ENCODE measurements at regions of chr3 and their contacts with region 1.

Region 1: GRCh38 chr3:101827211-101828174 is 21.8 kb upstream of the NFKBIZ start:
- DNase-seq: peak; percentile 68
- ATAC-seq: peak; percentile 86
- H3K4me3 Mint-ChIP-seq: peak overlapping the region; percentile 87
- H3K27ac Mint-ChIP-seq: peak overlapping the region; percentile 98
- H3K4me1 Mint-ChIP-seq: peaks cover 66% of the 10 kb centered on the region
- H3K27me3 Mint-ChIP-seq: no peaks in the 10 kb centered on the region
- CTCF ChIP-seq: no peak

Region 2: GRCh38 chr3:100603469-100603868 is 1224.0 kb before region 1 on chr3:
- CTCF ChIA-PET with region 1: no interaction called
- POLR2A ChIA-PET with region 1: no interaction called
- intact Hi-C with region 1: no loop called
- DNase-seq: no peak
- ATAC-seq: peak; percentile 45
- H3K4me3 Mint-ChIP-seq: peak overlapping the region; percentile 83
- H3K27ac Mint-ChIP-seq: peak overlapping the region; percentile 97
- H3K4me1 Mint-ChIP-seq: peaks cover 27% of the 10 kb centered on the region
- H3K27me3 Mint-ChIP-seq: peaks cover 3% of the 10 kb centered on the region
- CTCF ChIP-seq: no peak

Region 3: GRCh38 chr3:101809178-101810021 is 18.1 kb before region 1 on chr3:
- CTCF ChIA-PET with region 1: interaction called, 11 read pairs
- POLR2A ChIA-PET with region 1: interaction called, 13 read pairs
- intact Hi-C with region 1: no loop called
- DNase-seq: no peak
- ATAC-seq: peak; percentile 82
- H3K4me3 Mint-ChIP-seq: no peak overlapping the region
- H3K27ac Mint-ChIP-seq: no peak overlapping the region
- H3K4me1 Mint-ChIP-seq: peaks cover 37% of the 10 kb centered on the region
- H3K27me3 Mint-ChIP-seq: no peaks in the 10 kb centered on the region
- CTCF ChIP-seq: peak; percentile 59

Region 4: DNA sequence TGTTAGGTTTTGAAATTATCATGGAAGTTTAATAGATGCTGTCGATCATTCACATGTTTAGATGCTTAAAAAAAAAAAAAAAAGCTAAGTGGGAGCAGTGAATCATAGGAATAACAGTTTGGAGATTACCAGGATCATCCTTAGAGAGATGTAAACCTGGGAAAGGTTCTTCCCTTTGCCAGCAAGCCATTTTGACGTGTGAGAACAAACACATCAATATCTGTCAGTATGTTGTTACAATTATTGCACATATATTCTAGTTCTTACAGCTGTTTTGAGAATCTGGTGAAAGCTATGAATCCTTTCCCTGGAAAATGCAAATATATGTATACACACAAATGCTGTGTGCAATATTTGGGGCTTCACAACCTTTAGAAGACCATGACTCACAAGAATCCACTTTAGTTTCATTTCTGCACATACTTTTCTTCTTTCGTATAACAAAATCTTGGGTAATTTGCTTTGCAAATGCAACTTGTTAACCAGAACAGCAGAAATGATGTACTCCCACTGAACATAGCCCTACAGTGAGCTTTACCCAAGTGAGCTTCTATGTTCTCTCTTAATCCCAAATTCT is 33.8 kb after region 1 on chr3:
- CTCF ChIA-PET with region 1: no interaction called
- POLR2A ChIA-PET with region 1: interaction called, 20 read pairs
- intact Hi-C with region 1: loop called (anchors 5 kb)
- DNase-seq: no peak
- ATAC-seq: peak; percentile 64
- H3K4me3 Mint-ChIP-seq: peak overlapping the region; percentile 51
- H3K27ac Mint-ChIP-seq: peak overlapping the region; percentile 75
- H3K4me1 Mint-ChIP-seq: peaks cover 76% of the 10 kb centered on the region
- H3K27me3 Mint-ChIP-seq: no peaks in the 10 kb centered on the region
- CTCF ChIP-seq: no peak

Measured in activated B cell treated with CpG ODN at 0.5 μM for 24 hours (primary cell).